ENCODE measurements at regions of chr10 and their contacts with region 1.

Region 1: DNA sequence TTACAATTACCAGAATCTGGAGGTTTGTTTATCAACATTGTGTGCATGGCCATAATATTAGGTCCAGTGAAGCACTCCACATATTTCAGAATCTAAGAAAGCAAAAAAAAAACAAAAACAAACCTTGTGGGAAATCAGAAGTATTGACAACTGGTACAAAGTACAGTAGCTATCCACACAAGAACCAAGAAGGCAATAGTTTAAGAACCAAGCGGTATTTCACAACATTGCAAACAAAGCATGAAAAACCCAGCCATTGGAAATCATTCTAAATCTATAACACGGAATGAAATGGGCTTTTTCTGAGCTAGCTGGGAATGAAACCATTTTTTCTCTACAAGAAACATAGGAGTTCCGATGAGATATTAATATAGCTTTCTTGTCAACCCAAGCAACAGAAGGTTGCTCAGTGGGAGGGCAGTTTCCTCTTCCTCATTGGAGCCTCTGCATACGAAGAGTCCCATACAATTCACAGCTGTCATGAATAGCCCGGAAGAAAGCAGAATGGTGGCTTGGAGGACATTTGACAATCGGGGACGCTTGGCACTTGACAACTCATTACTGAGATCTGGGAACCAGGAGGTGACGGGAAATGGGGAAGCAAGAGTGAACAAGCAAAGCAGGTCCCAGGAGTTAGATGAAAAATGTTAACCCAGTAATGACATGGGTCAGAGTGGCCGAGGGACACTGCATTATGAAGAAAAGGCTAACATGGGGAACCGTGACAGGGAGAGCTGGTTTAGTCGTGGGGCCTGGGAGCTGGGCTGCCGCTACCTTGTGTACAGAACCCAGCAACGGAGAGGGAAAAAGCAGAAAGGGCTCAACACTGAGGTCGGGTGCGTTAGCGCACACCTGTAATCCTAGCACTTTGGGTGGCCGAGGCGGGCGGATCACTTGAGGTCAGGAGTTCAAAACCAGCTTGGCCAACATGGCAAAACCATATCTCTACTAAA is 7.8 kb downstream of the PHYH start:
- DNase-seq: no peak
- H3K4me3 ChIP-seq: no peak overlapping the region
- H3K27ac ChIP-seq: no peak overlapping the region
- H3K4me1 ChIP-seq: no peaks in the 10 kb centered on the region
- H3K27me3 ChIP-seq: no peaks in the 10 kb centered on the region
- CTCF ChIP-seq: no peak

Region 2: DNA sequence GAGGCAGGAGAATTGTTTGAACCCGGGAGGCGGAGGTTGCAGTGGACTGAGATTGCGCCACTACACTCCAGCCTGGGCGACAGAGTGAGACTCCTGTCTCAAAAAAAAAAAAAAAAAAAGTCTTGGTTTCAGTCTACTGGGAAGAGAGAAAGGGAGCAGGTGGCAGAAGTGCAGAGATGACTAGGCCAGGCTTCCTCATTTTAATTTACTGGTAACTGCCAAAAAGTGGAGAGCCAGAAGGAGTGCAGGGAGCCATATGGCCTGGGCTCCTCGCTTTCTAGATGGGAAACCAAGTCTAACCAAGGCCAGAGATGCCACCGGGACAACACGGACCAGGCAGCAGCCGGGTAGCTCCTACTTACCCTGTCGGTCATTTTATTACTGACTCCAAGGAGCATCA is 43.8 kb after region 1 on chr10:
- CTCF ChIA-PET with region 1: no interaction called
- POLR2A ChIA-PET with region 1: interaction called, 13 read pairs
- intact Hi-C with region 1: no loop called
- DNase-seq: no peak
- H3K4me3 ChIP-seq: no peak overlapping the region
- H3K27ac ChIP-seq: no peak overlapping the region
- H3K4me1 ChIP-seq: peaks cover 17% of the 10 kb centered on the region
- H3K27me3 ChIP-seq: no peaks in the 10 kb centered on the region
- CTCF ChIP-seq: no peak